PC-9 (cell line): ENCODE measurements at regions of chr6 and their contacts with region 1.

Region 1: DNA sequence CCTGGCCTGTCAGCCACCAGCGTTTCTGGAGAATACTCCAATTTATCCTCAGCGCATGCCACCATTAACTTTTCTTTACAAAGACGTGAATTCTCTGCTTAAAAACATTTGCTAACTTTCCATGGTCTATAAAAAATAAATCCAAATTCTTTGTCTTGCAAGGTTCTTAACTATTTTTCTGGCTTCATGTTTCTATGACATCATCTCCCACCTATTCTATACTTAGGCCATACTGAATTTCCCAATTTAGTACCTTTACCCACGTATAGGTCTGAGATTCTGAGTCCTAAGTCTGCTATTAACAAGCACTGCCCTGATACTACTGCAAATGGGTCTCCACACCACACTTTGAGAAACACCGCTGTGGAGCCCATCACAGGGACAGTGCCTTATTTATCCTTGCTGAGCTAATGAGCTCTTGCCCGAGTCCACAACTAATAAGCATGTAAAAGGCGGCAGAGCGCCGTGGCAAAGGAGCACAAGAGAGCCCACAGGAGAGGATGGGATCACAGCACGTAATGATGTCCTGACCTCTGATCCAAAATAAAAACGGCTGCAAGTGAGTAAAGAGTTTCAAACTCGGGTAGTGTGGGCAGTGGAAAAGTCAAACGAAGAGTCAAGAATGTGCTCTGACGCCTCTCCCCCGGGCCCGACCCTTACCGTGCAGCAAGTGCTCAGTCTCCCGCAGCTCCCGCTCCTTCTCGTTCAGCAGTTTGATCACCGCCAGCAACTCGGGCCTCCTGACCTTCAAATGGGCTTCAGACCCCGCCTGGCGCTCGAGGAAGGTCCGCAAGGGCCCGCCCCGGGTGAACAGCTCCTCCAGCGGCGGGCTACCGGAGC is 522 bp downstream of the MTRF1L start:
- DNase-seq: no peak
- H3K4me3 ChIP-seq: peak overlapping the region; percentile 96
- H3K27ac ChIP-seq: peak overlapping the region; percentile 79
- H3K4me1 ChIP-seq: peaks cover 33% of the 10 kb centered on the region
- H3K27me3 ChIP-seq: no peaks in the 10 kb centered on the region
- CTCF ChIP-seq: no peak

Region 2: DNA sequence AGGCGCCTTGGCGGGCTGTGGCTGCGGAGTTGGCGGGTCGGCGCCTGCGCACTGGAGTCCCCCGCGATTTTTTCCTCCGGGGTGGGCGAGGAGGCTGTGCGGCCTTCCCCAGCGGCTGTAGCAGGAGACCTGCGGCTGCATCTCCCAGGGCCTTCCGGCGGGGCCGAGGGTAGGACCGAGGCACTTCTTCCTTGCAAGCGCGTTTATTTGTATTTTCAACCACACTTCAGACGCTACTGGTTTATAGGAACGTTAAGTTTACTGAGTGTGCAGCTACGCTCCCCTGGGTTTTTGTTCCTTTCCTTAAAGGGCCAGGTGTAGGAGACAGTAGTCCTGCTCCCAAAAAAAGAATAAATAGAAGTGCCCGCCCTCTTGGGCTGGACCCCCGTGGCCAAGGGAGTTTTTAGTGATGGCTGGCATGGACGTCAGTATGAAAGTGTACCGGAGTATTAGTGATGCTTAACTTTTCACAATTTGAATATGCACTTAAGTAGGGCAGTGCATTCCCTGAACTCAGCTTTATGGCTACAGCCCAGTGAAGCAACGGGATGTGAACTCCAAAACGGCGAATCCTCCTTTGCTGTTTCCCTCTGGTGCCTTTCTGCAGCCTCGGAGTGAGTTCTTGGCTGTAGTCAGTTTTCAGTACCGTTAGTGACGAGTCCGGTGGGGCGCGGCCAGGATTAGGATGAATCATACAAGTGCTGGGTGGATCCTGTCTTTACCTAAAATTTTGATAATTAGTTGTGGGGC is 18.2 kb before region 1 on chr6:
- CTCF ChIA-PET with region 1: no interaction called
- POLR2A ChIA-PET with region 1: interaction called, 6 read pairs
- intact Hi-C with region 1: loop called (anchors 2 kb)
- DNase-seq: peak; percentile 60 to 63
- H3K4me3 ChIP-seq: peak overlapping the region; percentile 87
- H3K27ac ChIP-seq: peak overlapping the region; percentile 61
- H3K4me1 ChIP-seq: peaks cover 37% of the 10 kb centered on the region
- H3K27me3 ChIP-seq: no peaks in the 10 kb centered on the region
- CTCF ChIP-seq: no peak